Activated CD8-positive, alpha-beta T cell treated with anti-CD3 and anti-CD28 coated beads, Interleukin-2, amount 10 ng/mL, durations not matched to agents 7 days and 5 days (primary cell): ENCODE measurements at regions of chr9 and their contacts with region 1.

Region 1: GRCh38 chr9:113511856-113512761 is 48.6 kb downstream of the RGS3 start:
- DNase-seq: peak; percentile 90
- ATAC-seq: peak; percentile 75
- H3K4me3 Mint-ChIP-seq: peak overlapping the region; percentile 69
- H3K27ac Mint-ChIP-seq: peak overlapping the region; percentile 96
- H3K4me1 Mint-ChIP-seq: peaks cover 89% of the 10 kb centered on the region
- H3K27me3 Mint-ChIP-seq: no peaks in the 10 kb centered on the region

Region 2: DNA sequence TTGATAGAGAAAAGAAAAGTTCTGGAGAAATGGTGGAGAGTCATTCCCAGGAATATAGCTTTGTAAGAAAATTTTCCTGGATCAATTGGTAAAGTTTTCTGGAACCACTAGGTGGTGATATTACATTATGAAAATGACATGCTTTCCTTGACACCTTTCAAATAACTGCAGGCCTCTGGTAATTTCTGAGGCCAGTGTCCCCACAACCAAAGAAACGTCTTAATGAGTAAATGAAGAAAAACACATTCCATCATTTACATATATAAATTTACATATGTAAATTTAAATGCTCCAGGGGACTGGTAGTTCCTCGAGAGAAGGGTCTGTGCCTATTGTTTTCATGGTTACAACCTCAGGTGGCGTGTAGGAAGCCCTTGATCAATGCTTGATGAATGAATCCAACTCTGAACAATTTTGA is 65.8 kb before region 1 on chr9:
- CTCF ChIA-PET with region 1: interaction called, 13 read pairs
- POLR2A ChIA-PET with region 1: no interaction called
- DNase-seq: peak; percentile 31
- ATAC-seq: no peak
- H3K4me3 Mint-ChIP-seq: no peak overlapping the region
- H3K27ac Mint-ChIP-seq: no peak overlapping the region
- H3K4me1 Mint-ChIP-seq: peaks cover 3% of the 10 kb centered on the region
- H3K27me3 Mint-ChIP-seq: no peaks in the 10 kb centered on the region

Region 3: GRCh38 chr9:113523421-113524236 is 11.5 kb after region 1 on chr9:
- CTCF ChIA-PET with region 1: interaction called, 17 read pairs
- POLR2A ChIA-PET with region 1: interaction called, 6 read pairs
- DNase-seq: peak; percentile 63
- ATAC-seq: peak; percentile 73
- H3K4me3 Mint-ChIP-seq: peak overlapping the region; percentile 65
- H3K27ac Mint-ChIP-seq: peak overlapping the region; percentile 69
- H3K4me1 Mint-ChIP-seq: peaks cover 86% of the 10 kb centered on the region
- H3K27me3 Mint-ChIP-seq: no peaks in the 10 kb centered on the region

Region 4: DNA sequence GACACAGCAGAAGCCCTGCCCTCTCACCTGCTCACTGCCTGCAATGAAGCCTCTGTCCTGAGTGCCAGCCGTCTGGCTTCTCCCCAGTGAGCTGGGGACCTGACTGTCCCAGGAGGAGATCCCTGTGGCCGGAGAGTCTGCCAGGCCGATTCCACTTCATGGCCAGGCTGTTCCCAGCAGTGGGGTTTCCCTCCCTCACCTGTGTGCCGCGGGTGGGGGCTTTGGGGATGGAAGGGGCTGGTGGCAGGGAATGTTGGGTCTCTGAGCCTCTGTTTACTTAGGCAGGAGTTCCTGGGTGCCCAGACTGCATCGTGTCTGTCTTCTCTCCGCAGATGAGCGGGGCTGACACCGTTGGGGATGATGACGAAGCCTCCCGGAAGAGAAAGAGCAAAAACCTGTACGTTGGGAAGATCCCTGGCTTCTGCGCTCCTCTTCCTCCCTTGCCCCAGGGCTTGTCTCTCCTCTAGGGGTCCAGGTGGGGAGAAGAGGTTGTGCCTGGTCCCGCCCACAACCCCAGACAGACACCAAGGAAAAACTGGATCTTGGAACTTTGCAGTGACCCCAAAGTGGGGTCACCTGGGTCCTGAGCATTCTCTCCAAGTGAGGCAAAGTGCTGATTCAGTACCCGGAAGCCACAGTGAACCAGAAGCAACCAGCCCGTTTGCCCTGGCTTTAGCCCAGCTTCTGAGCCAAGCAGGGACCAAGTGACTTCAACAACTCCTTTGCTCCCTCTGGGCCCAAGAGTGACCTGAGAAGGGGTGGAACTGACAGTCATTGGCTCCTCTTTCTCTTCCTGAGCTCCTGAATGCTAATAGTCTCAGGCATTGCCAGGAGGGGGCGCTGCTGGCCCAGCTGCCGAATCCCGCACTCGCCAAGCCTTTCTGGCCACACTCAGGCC is 79.1 kb after region 1 on chr9:
- CTCF ChIA-PET with region 1: interaction called, 11 read pairs
- POLR2A ChIA-PET with region 1: interaction called, 3 read pairs
- DNase-seq: peak; percentile 62
- ATAC-seq: peak; percentile 35
- H3K4me3 Mint-ChIP-seq: no peak overlapping the region
- H3K27ac Mint-ChIP-seq: no peak overlapping the region
- H3K4me1 Mint-ChIP-seq: peaks cover 51% of the 10 kb centered on the region
- H3K27me3 Mint-ChIP-seq: no peaks in the 10 kb centered on the region

Region 5: GRCh38 chr9:113622600-113623400 is 110.7 kb after region 1 on chr9:
- CTCF ChIA-PET with region 1: no interaction called
- POLR2A ChIA-PET with region 1: no interaction called
- DNase-seq: no peak
- ATAC-seq: peak; percentile 36
- H3K4me3 Mint-ChIP-seq: no peak overlapping the region
- H3K27ac Mint-ChIP-seq: no peak overlapping the region
- H3K4me1 Mint-ChIP-seq: peaks cover 7% of the 10 kb centered on the region
- H3K27me3 Mint-ChIP-seq: no peaks in the 10 kb centered on the region